ENCODE measurements at regions of chr10 and their contacts with region 1.

Region 1: GRCh38 chr10:128230401-128230800 is 104.2 kb upstream of the MKI67 start:
- DNase-seq: no peak
- H3K4me3 ChIP-seq: no peak overlapping the region
- H3K27ac ChIP-seq: no peak overlapping the region
- H3K4me1 ChIP-seq: no peaks in the 10 kb centered on the region
- H3K27me3 ChIP-seq: peaks cover 0 to 14% of the 10 kb centered on the region in 2 donors
- CTCF ChIP-seq: no peak
- POLR2A ChIP-seq: no peak

Region 2: GRCh38 chr10:126945351-126946012 is 1284.9 kb before region 1 on chr10:
- intact Hi-C with region 1: loop called (anchors 5 kb)
- DNase-seq: peak in 1 of 2 donors; percentile 22
- H3K4me3 ChIP-seq: no peak overlapping the region
- H3K27ac ChIP-seq: no peak overlapping the region
- H3K4me1 ChIP-seq: no peaks in the 10 kb centered on the region
- H3K27me3 ChIP-seq: no peaks in the 10 kb centered on the region
- CTCF ChIP-seq: no peak
- POLR2A ChIP-seq: no peak

Region 3: DNA sequence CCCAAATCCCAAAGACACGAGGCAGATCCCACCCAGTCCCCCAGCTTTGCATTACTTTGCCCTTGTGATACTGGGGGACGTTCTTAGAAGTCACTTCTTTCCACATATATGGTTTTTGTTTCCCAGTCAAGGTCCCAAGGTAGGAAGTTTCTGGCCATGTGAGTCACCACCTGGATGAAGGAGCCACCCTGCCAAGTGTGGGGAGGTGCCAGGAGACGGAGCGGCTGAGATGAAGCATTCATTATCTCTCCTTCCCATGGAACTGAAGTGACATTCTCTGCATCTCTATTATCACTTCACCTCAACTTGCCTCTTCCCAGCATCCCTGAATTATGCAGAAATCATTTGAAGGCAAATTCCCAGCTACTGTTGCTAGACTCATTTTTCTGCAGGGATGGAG is 897.8 kb before region 1 on chr10:
- intact Hi-C with region 1: no loop called
- DNase-seq: no peak
- H3K4me3 ChIP-seq: no peak overlapping the region
- H3K27ac ChIP-seq: no peak overlapping the region
- H3K4me1 ChIP-seq: no peaks in the 10 kb centered on the region
- H3K27me3 ChIP-seq: no peaks in the 10 kb centered on the region
- CTCF ChIP-seq: no peak
- POLR2A ChIP-seq: no peak

Region 4: GRCh38 chr10:127535802-127536515 is 694.4 kb before region 1 on chr10:
- intact Hi-C with region 1: no loop called
- DNase-seq: peak in 1 of 2 donors; percentile 48
- H3K4me3 ChIP-seq: no peak overlapping the region
- H3K27ac ChIP-seq: peak overlapping the region; percentile 25 to 32
- H3K4me1 ChIP-seq: no peaks in the 10 kb centered on the region
- H3K27me3 ChIP-seq: no peaks in the 10 kb centered on the region
- CTCF ChIP-seq: no peak
- POLR2A ChIP-seq: no peak

Region 5: GRCh38 chr10:127962205-127962604 is 268.2 kb before region 1 on chr10:
- intact Hi-C with region 1: no loop called
- DNase-seq: no peak
- H3K4me3 ChIP-seq: no peak overlapping the region
- H3K27ac ChIP-seq: no peak overlapping the region
- H3K4me1 ChIP-seq: no peaks in the 10 kb centered on the region
- H3K27me3 ChIP-seq: no peaks in the 10 kb centered on the region
- CTCF ChIP-seq: no peak
- POLR2A ChIP-seq: no peak

Region 6: GRCh38 chr10:128242641-128243040 is 12.2 kb after region 1 on chr10:
- intact Hi-C with region 1: no loop called
- DNase-seq: no peak
- H3K4me3 ChIP-seq: no peak overlapping the region
- H3K27ac ChIP-seq: no peak overlapping the region
- H3K4me1 ChIP-seq: no peaks in the 10 kb centered on the region
- H3K27me3 ChIP-seq: no peaks in the 10 kb centered on the region
- CTCF ChIP-seq: no peak
- POLR2A ChIP-seq: no peak

Region 7: GRCh38 chr10:130099344-130099743 is 1868.9 kb after region 1 on chr10:
- intact Hi-C with region 1: loop called (anchors 5 kb)
- DNase-seq: no peak
- H3K4me3 ChIP-seq: no peak overlapping the region
- H3K27ac ChIP-seq: no peak overlapping the region
- H3K4me1 ChIP-seq: no peaks in the 10 kb centered on the region
- H3K27me3 ChIP-seq: no peaks in the 10 kb centered on the region
- CTCF ChIP-seq: no peak
- POLR2A ChIP-seq: no peak

Measured in breast epithelium (tissue), 4 donors.